ENCODE measurements at regions of chr18 and their contacts with region 1.

Region 1: DNA sequence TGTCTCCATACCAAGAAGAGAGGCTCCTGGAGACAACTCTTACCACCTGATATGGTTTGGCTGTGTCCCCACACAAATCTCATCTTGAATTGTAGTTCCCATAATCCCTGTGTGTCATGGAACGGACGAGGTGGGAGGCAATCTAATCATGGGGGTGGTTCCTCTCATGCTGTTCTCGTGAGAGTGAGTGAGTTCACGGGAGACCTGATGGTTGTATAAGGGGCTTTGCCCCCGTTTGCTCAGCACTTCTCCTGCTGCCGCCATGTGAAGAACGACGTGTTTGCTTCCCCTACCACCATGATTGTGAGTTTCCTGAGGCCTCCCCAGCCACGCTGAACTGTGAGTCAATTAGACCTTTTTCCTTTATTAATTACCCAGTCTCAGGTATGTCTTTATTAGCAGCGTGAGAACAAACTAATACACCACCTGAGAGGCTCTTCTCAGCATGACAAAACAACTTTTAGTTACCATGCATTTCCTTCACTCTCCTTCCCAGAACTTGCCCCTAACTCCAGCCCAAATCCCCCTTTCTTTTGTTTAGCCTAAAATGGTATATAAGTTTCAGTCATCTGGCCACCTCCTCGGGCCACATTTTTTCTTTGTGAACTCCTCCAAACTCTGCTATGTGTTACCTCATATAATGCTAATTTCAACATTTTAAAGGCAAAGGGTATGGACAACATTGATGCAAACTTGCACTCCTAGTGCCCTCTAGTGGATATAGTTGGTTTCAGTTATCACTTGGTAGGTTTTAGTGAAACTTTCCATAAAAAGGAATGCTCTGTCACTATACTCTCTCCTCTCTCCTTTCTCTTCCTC is 58.6 kb upstream of the SLC25A52 start:
- DNase-seq: peak; percentile 59
- ATAC-seq: peak; percentile 81
- H3K4me3 ChIP-seq: no peak overlapping the region
- H3K27ac ChIP-seq: no peak overlapping the region
- H3K4me1 ChIP-seq: peaks cover 15% of the 10 kb centered on the region
- H3K27me3 ChIP-seq: no peaks in the 10 kb centered on the region
- CTCF ChIP-seq: peak; percentile 81
- EP300 ChIP-seq: no peak
- POLR2A ChIP-seq: no peak
- RAD21 ChIP-seq: peak; percentile 49; the same call in 1 of the 2 replicates

Region 2: GRCh38 chr18:30208546-30208945 is 1610.8 kb before region 1 on chr18:
- CTCF ChIA-PET with region 1: no interaction called
- POLR2A ChIA-PET with region 1: no interaction called
- in situ Hi-C with region 1: no loop called
- intact Hi-C with region 1: no loop called
- DNase-seq: no peak
- ATAC-seq: no peak
- H3K4me3 ChIP-seq: no peak overlapping the region
- H3K27ac ChIP-seq: no peak overlapping the region
- H3K4me1 ChIP-seq: no peaks in the 10 kb centered on the region
- H3K27me3 ChIP-seq: no peaks in the 10 kb centered on the region
- CTCF ChIP-seq: no peak
- EP300 ChIP-seq: no peak
- POLR2A ChIP-seq: no peak
- RAD21 ChIP-seq: no peak

Region 3: GRCh38 chr18:31603315-31603714 is 216.0 kb before region 1 on chr18:
- CTCF ChIA-PET with region 1: no interaction called
- POLR2A ChIA-PET with region 1: no interaction called
- in situ Hi-C with region 1: no loop called
- intact Hi-C with region 1: loop called (anchors 10 kb)
- DNase-seq: no peak
- ATAC-seq: no peak
- H3K4me3 ChIP-seq: no peak overlapping the region
- H3K27ac ChIP-seq: no peak overlapping the region
- H3K4me1 ChIP-seq: peaks cover 38% of the 10 kb centered on the region
- H3K27me3 ChIP-seq: no peaks in the 10 kb centered on the region
- CTCF ChIP-seq: no peak
- EP300 ChIP-seq: no peak
- POLR2A ChIP-seq: no peak
- RAD21 ChIP-seq: no peak

Region 4: GRCh38 chr18:31835528-31836133 is 16.3 kb after region 1 on chr18:
- CTCF ChIA-PET with region 1: no interaction called
- POLR2A ChIA-PET with region 1: no interaction called
- in situ Hi-C with region 1: no loop called
- intact Hi-C with region 1: no loop called
- DNase-seq: no peak
- ATAC-seq: no peak
- H3K4me3 ChIP-seq: no peak overlapping the region
- H3K27ac ChIP-seq: no peak overlapping the region
- H3K4me1 ChIP-seq: peaks cover 13% of the 10 kb centered on the region
- H3K27me3 ChIP-seq: no peaks in the 10 kb centered on the region
- CTCF ChIP-seq: no peak
- EP300 ChIP-seq: no peak
- POLR2A ChIP-seq: no peak
- RAD21 ChIP-seq: no peak

Region 5: GRCh38 chr18:32040936-32041335 is 221.6 kb after region 1 on chr18:
- CTCF ChIA-PET with region 1: no interaction called
- POLR2A ChIA-PET with region 1: no interaction called
- in situ Hi-C with region 1: no loop called
- intact Hi-C with region 1: no loop called
- DNase-seq: no peak
- ATAC-seq: no peak
- H3K4me3 ChIP-seq: no peak overlapping the region
- H3K27ac ChIP-seq: no peak overlapping the region
- H3K4me1 ChIP-seq: no peaks in the 10 kb centered on the region
- H3K27me3 ChIP-seq: no peaks in the 10 kb centered on the region
- CTCF ChIP-seq: no peak
- EP300 ChIP-seq: no peak
- POLR2A ChIP-seq: no peak
- RAD21 ChIP-seq: no peak